Activated CD4-positive, alpha-beta memory T cell treated with anti-CD3 and anti-CD28 coated beads for 36 hours (primary cell): ENCODE measurements at regions of chr16 and their contacts with region 1.

Region 1: DNA sequence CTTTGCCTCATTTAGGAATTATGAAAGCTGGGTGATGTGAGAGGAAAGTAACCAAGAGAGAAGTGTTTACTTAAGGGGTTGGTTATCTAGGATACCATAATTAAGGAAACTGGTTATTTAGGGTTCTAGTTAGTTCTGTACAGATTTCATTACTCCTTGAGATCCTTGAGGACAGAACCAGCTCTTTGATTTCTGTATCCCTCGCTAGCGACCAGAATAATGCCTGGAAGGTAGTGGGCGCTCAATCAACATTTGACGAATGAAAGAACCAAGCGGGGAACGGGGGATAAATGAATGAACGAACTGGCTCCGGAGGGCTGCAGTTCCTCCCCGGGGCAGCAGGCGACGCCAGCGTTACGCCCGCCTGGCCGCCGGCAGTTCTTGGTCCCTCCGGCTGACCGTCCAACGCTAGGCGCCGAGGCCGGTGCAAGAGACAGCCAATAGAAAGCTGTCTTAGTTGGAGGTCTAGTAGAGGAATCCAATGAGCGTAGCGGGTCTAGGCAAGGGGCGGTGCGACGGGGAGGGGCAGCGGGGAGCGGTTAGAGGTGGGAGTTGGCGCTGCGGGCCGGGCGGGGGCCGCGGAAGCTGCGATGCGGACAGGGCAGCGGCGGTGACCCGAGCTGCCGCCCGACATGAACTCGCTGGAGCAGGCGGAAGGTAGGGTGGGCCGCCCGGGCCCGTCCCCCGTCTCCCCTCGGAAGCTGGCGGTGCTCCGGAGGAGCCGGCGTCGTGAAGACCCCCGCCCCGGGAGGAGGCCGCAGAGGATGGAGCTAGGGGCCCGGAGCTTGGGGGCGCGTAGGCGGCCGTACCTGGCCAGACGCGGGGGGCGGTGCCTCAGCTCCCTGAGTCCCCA is at the start of gene CNEP1R1:
- DNase-seq: peak; percentile 96
- H3K4me3 Mint-ChIP-seq: peak within 1 kb of the TSS; percentile 91
- H3K27ac Mint-ChIP-seq: peak within 1 kb of the TSS; percentile 83
- H3K4me1 Mint-ChIP-seq: peaks cover 19% of the 10 kb centered on the region
- H3K27me3 Mint-ChIP-seq: no peaks in the 10 kb centered on the region
- total RNA-seq, gene CNEP1R1: 23.9 to 24.5 TPM

Region 2: DNA sequence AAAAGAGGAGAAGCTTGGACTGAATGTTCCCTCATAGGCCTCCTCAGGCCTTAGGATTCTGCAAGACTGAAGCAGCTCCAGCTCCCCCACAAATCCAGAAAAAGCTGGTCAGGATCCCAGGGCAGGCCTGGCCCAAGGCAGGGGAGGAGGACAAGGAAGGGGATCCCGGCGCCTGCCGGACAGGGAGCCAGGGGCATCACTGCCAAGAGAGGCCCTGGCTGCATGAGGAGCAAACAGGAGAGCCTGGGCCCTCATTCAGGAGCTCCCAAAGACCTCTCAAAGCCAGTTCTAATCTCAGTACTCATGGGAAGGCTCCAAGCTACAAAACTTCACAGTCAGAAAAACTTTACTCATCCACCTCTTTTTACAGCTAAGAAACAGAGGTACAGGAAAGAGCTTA is 236.3 kb before region 1 on chr16:
- CTCF ChIA-PET with region 1: no interaction called
- POLR2A ChIA-PET with region 1: no interaction called
- intact Hi-C with region 1: no loop called
- DNase-seq: no peak
- H3K4me3 Mint-ChIP-seq: no peak overlapping the region
- H3K27ac Mint-ChIP-seq: no peak overlapping the region
- H3K4me1 Mint-ChIP-seq: no peaks in the 10 kb centered on the region
- H3K27me3 Mint-ChIP-seq: no peaks in the 10 kb centered on the region

Region 3: DNA sequence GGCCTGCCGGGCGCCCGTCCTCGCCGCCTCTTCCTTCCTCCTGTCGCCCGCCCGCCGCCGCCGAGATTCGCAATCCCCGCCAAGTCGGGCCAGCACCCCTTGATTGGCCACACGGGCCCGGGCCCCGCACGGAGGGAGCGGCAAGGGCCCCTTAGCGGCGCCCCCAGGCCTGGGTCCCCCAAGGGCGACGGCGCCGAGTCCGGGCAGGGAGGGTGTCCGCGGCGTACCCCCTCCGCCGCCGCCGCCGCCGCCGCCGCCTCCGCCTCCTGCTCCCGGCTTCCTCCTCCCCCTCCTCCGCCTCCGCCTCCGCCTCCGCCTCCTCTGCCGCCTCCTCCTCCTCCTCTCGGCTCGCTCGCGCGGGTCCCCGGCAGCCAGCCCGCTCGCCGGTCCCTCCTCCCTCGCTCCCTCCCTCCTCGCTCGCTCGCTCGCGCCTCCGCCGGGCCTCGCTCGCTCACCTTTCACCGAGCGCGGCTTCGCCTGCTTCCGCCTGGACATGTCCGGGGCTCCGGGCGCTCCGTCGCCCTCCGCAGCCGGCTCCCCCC is 169.6 kb before region 1 on chr16:
- CTCF ChIA-PET with region 1: interaction called, 15 read pairs
- POLR2A ChIA-PET with region 1: no interaction called
- intact Hi-C with region 1: loop called (anchors 10 kb)
- DNase-seq: peak; percentile 55
- H3K4me3 Mint-ChIP-seq: peak overlapping the region; percentile 35
- H3K27ac Mint-ChIP-seq: no peak overlapping the region
- H3K4me1 Mint-ChIP-seq: peaks cover 15% of the 10 kb centered on the region
- H3K27me3 Mint-ChIP-seq: peaks cover 38% of the 10 kb centered on the region

Region 4: GRCh38 chr16:49884033-49885015 is 140.6 kb before region 1 on chr16:
- CTCF ChIA-PET with region 1: no interaction called
- POLR2A ChIA-PET with region 1: no interaction called
- intact Hi-C with region 1: no loop called
- DNase-seq: no peak
- H3K4me3 Mint-ChIP-seq: no peak overlapping the region
- H3K27ac Mint-ChIP-seq: no peak overlapping the region
- H3K4me1 Mint-ChIP-seq: no peaks in the 10 kb centered on the region
- H3K27me3 Mint-ChIP-seq: peaks cover 18% of the 10 kb centered on the region

Region 5: DNA sequence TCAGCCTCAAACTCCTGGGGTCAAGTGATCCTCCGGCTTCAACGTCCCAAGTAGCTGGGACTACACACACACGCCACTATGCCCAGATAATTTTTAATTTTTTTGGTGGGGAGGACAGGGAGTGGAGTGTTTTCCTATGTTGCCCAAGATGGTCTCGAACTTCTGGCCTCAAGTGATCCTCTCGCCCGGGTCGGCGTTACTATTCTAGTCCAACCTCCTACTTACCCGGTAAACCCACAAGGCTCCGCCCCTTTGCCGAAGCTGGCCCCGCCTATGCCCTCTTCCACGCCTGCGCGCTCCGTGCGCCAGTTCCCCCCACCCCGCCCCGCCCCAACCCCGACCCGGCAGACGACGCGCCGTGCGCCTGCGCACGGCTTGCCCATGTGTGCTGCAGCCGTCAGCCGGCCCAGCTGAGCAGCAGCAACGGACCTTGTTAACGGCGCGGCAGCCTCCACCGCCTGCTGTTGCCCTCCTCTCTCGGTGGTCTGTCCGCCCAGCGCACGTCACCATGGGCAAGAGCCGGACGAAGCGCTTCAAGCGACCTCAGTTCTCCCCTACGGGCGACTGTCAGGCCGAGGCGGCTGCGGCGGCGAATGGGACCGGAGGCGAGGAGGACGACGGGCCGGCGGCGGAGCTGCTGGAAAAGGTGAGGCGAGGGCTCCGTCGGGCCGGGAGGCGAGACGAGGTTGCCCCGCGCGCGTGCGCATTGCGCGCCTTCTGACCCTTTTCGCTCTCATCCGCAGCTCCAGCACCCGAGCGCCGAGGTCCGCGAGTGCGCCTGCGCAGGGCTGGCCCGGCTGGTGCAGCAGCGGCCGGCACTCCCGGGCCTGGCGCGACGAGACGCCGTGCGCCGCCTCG is 40.9 kb after region 1 on chr16 and contains the start of gene HEATR3:
- CTCF ChIA-PET with region 1: interaction called, 67 read pairs
- POLR2A ChIA-PET with region 1: interaction called, 11 read pairs
- intact Hi-C with region 1: loop called (anchors 1 kb)
- DNase-seq: peak; percentile 98
- H3K4me3 Mint-ChIP-seq: peak within 1 kb of the TSS; percentile 90
- H3K27ac Mint-ChIP-seq: peak within 1 kb of the TSS; percentile 87
- H3K4me1 Mint-ChIP-seq: peaks cover 31% of the 10 kb centered on the region
- H3K27me3 Mint-ChIP-seq: no peaks in the 10 kb centered on the region
- total RNA-seq, gene HEATR3: 17.6 to 18.6 TPM

Region 6: DNA sequence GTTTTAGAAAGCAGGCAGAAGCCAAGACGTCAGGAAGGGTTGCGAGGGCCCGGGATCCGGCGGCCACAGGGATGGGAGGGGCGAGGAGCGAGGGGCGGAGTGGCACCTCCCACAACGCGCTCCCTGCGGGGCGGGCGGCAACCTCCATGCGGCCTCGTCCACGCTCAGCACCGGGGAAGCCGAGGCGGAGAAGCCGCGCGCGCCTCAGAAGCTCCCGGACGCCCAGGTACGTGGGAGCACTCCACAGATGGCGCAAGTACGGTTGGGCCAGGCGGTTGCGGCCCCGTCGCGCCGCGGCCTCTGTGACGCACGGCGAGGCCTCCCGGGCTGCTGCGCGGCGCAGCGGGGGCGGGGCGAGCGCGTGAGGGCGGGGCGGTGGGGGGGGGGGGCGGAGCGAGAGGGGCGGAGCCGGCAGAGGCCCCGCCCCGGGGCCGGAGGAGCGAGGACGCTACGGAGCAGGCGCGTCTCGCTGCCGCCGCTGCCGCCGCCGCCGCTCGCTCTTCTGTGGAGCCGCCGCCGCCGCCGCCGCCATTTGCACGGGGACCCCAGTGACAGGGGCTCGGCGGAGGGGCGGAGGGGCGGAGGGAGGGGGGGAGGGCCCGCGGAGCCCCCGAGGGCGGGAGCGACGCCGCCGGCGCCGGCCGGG is 128.0 kb after region 1 on chr16 and contains the start of gene TENT4B:
- CTCF ChIA-PET with region 1: interaction called, 14 read pairs
- POLR2A ChIA-PET with region 1: interaction called, 9 read pairs
- intact Hi-C with region 1: loop called (anchors 1 kb)
- DNase-seq: peak; percentile 90
- H3K4me3 Mint-ChIP-seq: peak within 1 kb of the TSS; percentile 80
- H3K27ac Mint-ChIP-seq: peak within 1 kb of the TSS; percentile 91
- H3K4me1 Mint-ChIP-seq: peaks cover 32% of the 10 kb centered on the region
- H3K27me3 Mint-ChIP-seq: no peaks in the 10 kb centered on the region
- total RNA-seq, gene TENT4B: 14.4 to 14.8 TPM

Region 7: GRCh38 chr16:50266337-50267091 is 241.6 kb after region 1 on chr16 and contains the start of gene ADCY7:
- CTCF ChIA-PET with region 1: interaction called, 4 read pairs
- POLR2A ChIA-PET with region 1: no interaction called
- intact Hi-C with region 1: loop called (anchors 1 kb)
- DNase-seq: peak; percentile 91
- H3K4me3 Mint-ChIP-seq: peak within 1 kb of the TSS; percentile 94
- H3K27ac Mint-ChIP-seq: peak within 1 kb of the TSS; percentile 97
- H3K4me1 Mint-ChIP-seq: peaks cover 71% of the 10 kb centered on the region
- H3K27me3 Mint-ChIP-seq: no peaks in the 10 kb centered on the region
- total RNA-seq, gene ADCY7: 100.0 to 107 TPM

Region 8: GRCh38 chr16:50354629-50355456 is 329.9 kb after region 1 on chr16:
- CTCF ChIA-PET with region 1: interaction called, 18 read pairs
- POLR2A ChIA-PET with region 1: no interaction called
- intact Hi-C with region 1: no loop called
- DNase-seq: no peak
- H3K4me3 Mint-ChIP-seq: no peak overlapping the region
- H3K27ac Mint-ChIP-seq: no peak overlapping the region
- H3K4me1 Mint-ChIP-seq: peaks cover 30% of the 10 kb centered on the region
- H3K27me3 Mint-ChIP-seq: no peaks in the 10 kb centered on the region

Region 9: DNA sequence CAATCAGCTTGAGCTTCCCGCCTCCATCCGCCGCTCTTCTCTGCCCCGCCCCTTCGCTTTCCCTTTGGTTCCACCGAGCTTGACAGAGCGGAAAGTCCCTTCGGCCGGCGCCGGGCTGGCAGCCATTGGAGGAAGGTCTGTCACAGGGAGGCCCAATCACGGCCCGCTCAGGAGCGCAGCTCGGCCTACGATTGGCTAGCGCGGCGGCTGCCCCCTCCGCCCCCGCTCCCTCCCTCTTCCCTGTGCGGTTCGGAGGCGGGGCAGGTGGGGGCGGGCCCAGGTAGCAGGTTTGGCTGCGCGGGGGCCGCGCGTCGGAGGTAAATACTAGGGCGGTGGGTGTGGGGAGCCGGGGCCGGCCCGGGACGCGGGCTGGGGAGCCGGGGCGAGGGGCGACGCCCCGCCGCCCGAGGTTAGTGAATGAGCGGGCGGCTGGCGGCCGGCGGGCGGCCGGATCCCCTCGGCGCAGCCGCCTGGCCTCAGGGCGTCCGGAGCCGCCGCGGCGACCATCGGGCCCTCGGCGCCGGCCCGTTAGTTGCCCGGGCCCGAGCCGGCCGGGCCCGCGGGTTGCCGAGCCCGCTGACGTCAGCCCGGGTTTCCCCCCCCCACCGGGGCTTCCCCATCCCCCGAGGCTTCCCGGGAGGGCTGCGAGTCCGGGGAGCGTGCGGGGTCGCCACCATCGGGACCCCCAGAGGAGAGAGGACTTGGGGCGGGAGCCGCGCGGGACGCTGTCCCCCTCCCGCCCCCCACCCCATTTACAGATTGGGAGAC is 717.1 kb after region 1 on chr16 and contains the start of gene CYLD:
- CTCF ChIA-PET with region 1: interaction called, 3 read pairs
- POLR2A ChIA-PET with region 1: interaction called, 3 read pairs
- intact Hi-C with region 1: loop called (anchors 10 kb)
- DNase-seq: peak; percentile 100
- H3K4me3 Mint-ChIP-seq: peak within 1 kb of the TSS; percentile 94
- H3K27ac Mint-ChIP-seq: peak within 1 kb of the TSS; percentile 97
- H3K4me1 Mint-ChIP-seq: peaks cover 44% of the 10 kb centered on the region
- H3K27me3 Mint-ChIP-seq: no peaks in the 10 kb centered on the region
- total RNA-seq, gene CYLD: 133 to 135 TPM